Lower lobe of right lung (tissue), 2 donors: ENCODE measurements at regions of chr7 and their contacts with region 1.

Region 1: DNA sequence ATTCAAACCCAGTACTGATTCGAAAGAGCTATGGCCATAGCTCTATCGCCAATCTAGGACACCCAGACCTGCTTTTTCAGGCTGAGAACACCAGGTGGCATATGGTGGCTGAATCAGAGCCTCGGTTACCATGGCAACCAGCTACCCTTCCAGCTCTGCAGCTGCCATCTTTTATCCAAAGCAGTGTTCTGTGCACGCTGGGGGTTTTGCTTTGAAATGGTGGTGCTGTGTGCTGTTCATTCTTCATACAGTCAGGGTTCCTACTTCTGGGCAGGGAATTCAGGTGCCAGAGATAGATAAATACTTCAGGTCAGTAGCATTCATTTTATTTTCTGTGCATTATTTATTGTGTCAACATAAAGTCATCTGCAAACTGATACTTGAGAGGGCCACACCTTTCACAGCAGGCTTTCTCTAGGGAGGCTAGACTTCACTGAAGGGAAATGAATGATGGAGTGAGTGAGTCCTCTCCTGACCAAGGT is 85.4 kb downstream of the AKR1D1 start:
- DNase-seq: peak; percentile 77
- ATAC-seq: peak; percentile 92 to 94
- H3K4me3 ChIP-seq: no peak overlapping the region
- H3K27ac ChIP-seq: no peak overlapping the region
- H3K4me1 ChIP-seq: no peaks in the 10 kb centered on the region
- H3K27me3 ChIP-seq: no peaks in the 10 kb centered on the region
- CTCF ChIP-seq: peak; percentile 74

Region 2: GRCh38 chr7:138429577-138430250 is 268.1 kb after region 1 on chr7:
- intact Hi-C with region 1: no loop called
- DNase-seq: no peak
- ATAC-seq: no peak
- H3K4me3 ChIP-seq: no peak overlapping the region
- H3K27ac ChIP-seq: no peak overlapping the region
- H3K4me1 ChIP-seq: no peaks in the 10 kb centered on the region
- H3K27me3 ChIP-seq: no peaks in the 10 kb centered on the region
- CTCF ChIP-seq: no peak

Region 3: DNA sequence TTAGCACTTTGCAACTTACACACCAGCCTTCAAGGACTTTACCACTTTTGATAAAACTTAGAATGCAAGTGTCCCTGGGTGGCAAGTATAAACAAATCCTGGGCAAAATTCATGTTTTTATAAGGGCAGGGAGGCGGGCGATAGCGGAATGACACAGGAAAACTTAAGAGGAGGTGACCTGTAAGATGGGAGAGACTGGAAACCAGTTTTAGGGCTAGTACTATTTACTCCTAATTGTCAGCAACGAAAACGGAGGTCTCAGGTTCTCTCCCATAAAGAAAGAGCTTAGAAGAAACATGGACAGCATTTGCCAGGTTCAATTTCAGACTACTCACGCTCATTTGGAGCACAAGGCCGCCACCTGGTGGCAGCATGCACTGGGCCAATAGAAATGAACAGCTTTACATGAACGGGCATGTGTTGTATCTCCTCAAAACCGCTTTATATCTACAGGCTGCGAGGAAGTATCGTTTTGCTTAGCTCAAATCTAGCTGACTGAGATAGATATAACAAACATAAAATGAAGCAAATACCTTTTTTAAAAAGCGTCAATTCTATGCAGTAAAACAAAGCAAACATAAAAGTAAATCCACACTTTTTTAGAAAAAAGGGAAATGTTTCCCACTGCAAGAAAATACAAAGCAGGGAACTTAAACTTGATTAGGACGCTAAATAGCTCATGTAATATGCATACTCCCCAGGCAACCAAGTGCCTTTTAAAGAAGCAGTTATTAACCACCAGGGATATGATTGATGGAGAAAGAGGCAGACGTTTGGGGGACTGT is 577.1 kb after region 1 on chr7:
- intact Hi-C with region 1: loop called (anchors 5 kb)
- DNase-seq: peak; percentile 85
- ATAC-seq: peak; percentile 88 to 91
- H3K4me3 ChIP-seq: no peak overlapping the region
- H3K27ac ChIP-seq: no peak overlapping the region
- H3K4me1 ChIP-seq: no peaks in the 10 kb centered on the region
- H3K27me3 ChIP-seq: no peaks in the 10 kb centered on the region
- CTCF ChIP-seq: peak; percentile 91